ENCODE measurements at regions of chr17 and their contacts with region 1.

Region 1: DNA sequence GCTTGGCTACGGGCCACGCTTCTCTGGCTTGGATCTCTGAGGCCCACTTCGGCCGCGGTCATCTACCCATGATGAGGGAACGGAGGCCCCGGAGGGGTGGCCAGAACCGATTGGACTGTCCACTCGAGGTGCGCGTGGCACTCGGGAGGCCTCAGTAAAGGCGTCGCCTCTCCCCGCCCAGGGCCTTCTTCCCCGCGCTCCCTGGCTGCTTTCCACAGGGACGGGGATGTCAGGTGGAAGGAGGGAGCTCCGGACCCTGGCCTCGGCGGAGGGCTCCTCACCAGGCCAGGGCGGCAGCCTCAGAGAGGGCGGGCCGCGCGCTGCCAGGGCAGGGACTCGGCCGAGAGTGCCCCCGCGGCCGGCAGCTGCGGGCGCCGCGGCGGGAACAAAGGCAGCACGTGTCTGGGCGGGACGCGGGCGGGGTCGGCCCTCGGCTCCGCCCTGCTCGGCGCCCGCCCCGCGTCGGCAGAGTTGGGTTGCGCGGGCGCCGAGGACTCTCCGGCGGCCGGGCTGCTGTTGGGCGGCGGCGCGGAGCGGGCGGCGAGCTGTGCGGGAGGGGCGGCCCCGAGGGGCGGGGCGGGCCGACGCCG is 587 bp upstream of the CDK5R1 start:
- DNase-seq: no peak
- ATAC-seq: peak; percentile 81
- H3K4me3 Mint-ChIP-seq: peak overlapping the region; percentile 70
- H3K27ac Mint-ChIP-seq: peak overlapping the region; percentile 46
- H3K4me1 Mint-ChIP-seq: peaks cover 47% of the 10 kb centered on the region
- H3K27me3 Mint-ChIP-seq: no peaks in the 10 kb centered on the region
- CTCF ChIP-seq: no peak

Region 2: DNA sequence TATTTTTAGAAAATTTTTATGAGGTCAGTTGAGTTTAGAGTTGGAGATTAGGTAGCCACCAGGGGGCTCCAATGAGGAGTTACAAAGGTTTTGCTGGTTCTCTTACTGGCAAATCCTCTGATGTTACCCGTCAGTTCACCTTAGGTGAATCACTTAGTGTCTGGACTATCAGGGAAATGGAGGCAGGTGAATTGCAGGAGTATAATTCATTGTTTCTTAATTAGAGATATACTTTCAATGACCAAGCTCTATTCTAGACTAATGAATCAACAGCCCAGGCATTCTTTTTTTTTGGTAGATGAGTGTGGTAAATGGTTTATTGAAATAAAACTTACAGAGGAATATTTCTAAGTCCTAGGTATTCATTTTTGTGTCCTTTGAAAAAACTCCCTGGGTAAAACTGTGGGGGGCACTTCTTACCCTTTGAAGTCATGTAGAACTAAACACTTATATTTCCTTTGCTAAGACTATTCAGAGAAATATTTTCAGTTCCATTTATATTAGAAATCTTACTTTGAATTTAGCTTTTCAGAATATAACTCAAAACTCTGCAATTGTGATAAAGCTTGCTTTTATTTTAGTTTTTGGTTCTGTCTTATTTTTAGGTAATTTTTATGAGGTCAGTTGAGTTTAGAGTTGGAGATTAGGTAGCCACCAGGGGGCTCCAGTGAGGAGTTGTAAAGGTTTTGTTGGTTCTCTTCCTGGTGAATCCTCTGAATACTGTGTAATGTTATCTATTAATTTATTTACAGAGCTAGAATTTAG is 24.2 kb before region 1 on chr17:
- CTCF ChIA-PET with region 1: interaction called, 53 read pairs
- POLR2A ChIA-PET with region 1: interaction called, 3 read pairs
- intact Hi-C with region 1: loop called (anchors 1 kb)
- DNase-seq: no peak
- ATAC-seq: peak; percentile 74
- H3K4me3 Mint-ChIP-seq: no peak overlapping the region
- H3K27ac Mint-ChIP-seq: peak overlapping the region; percentile 30
- H3K4me1 Mint-ChIP-seq: peaks cover 13% of the 10 kb centered on the region
- H3K27me3 Mint-ChIP-seq: no peaks in the 10 kb centered on the region
- CTCF ChIP-seq: no peak

Region 3: GRCh38 chr17:32519228-32520103 is 33.3 kb after region 1 on chr17:
- CTCF ChIA-PET with region 1: interaction called, 20 read pairs
- POLR2A ChIA-PET with region 1: interaction called, 90 read pairs
- intact Hi-C with region 1: loop called (anchors 1 kb)
- DNase-seq: peak; percentile 48
- ATAC-seq: peak; percentile 14
- H3K4me3 Mint-ChIP-seq: peak overlapping the region; percentile 87
- H3K27ac Mint-ChIP-seq: peak overlapping the region; percentile 86
- H3K4me1 Mint-ChIP-seq: peaks cover 89% of the 10 kb centered on the region
- H3K27me3 Mint-ChIP-seq: no peaks in the 10 kb centered on the region
- CTCF ChIP-seq: no peak

Region 4: GRCh38 chr17:32609085-32609484 is 122.9 kb after region 1 on chr17:
- CTCF ChIA-PET with region 1: interaction called, 36 read pairs
- POLR2A ChIA-PET with region 1: no interaction called
- intact Hi-C with region 1: loop called (anchors 1 kb)
- DNase-seq: peak; percentile 52
- ATAC-seq: peak; percentile 100
- H3K4me3 Mint-ChIP-seq: no peak overlapping the region
- H3K27ac Mint-ChIP-seq: no peak overlapping the region
- H3K4me1 Mint-ChIP-seq: peaks cover 8% of the 10 kb centered on the region
- H3K27me3 Mint-ChIP-seq: no peaks in the 10 kb centered on the region
- CTCF ChIP-seq: no peak

Region 5: DNA sequence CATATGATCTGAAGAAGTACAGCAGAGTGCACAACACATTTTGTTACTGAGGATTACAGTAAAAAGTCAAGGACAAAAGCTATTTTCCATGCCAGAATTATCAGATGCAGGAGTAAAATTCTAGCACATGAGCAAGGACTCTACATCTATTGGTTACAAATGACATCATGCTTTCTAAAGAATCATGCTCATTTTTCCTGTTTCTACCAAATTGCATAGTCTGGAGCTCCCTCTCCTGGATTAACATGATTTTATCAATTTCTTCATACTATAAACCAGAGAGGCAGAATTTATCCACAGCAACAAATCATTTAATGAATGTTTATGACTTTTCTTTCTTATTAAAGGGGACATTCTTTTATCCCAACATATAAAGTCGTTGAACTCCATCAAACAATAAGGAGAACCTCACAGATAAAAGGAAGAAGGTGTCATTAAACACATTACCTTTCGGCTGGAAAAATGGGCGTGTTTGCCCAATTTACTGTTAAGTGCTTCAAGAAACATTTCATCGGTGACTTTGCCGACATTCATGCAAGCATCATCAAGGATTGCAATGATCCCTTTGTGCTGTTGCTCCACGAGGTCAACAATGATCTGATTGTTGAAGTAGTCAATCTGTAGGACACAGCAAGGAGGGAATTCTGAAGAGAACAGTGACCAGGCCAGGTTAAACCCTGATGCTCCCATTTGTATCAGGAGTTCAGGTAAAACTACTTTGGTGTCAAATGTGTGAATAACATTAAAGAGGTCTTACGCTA is 269.0 kb after region 1 on chr17:
- CTCF ChIA-PET with region 1: interaction called, 11 read pairs
- POLR2A ChIA-PET with region 1: no interaction called
- intact Hi-C with region 1: loop called (anchors 1 kb)
- DNase-seq: no peak
- ATAC-seq: peak; percentile 69
- H3K4me3 Mint-ChIP-seq: no peak overlapping the region
- H3K27ac Mint-ChIP-seq: no peak overlapping the region
- H3K4me1 Mint-ChIP-seq: no peaks in the 10 kb centered on the region
- H3K27me3 Mint-ChIP-seq: no peaks in the 10 kb centered on the region
- CTCF ChIP-seq: no peak

Region 6: GRCh38 chr17:32783602-32784001 is 297.4 kb after region 1 on chr17:
- CTCF ChIA-PET with region 1: interaction called, 17 read pairs
- POLR2A ChIA-PET with region 1: no interaction called
- intact Hi-C with region 1: no loop called
- DNase-seq: no peak
- ATAC-seq: peak; percentile 50
- H3K4me3 Mint-ChIP-seq: no peak overlapping the region
- H3K27ac Mint-ChIP-seq: no peak overlapping the region
- H3K4me1 Mint-ChIP-seq: peaks cover 3% of the 10 kb centered on the region
- H3K27me3 Mint-ChIP-seq: no peaks in the 10 kb centered on the region
- CTCF ChIP-seq: no peak

Region 7: GRCh38 chr17:32936894-32937500 is 450.8 kb after region 1 on chr17:
- CTCF ChIA-PET with region 1: no interaction called
- POLR2A ChIA-PET with region 1: no interaction called
- intact Hi-C with region 1: loop called (anchors 1 kb)
- DNase-seq: peak; percentile 35
- ATAC-seq: peak; percentile 34
- H3K4me3 Mint-ChIP-seq: peak overlapping the region; percentile 28
- H3K27ac Mint-ChIP-seq: no peak overlapping the region
- H3K4me1 Mint-ChIP-seq: peaks cover 3% of the 10 kb centered on the region
- H3K27me3 Mint-ChIP-seq: peaks cover 26% of the 10 kb centered on the region
- CTCF ChIP-seq: peak; percentile 36

Measured in activated B cell treated with CpG ODN at 0.5 μM for 24 hours (primary cell).